HepG2 (cell line): ENCODE measurements at regions of chr10 and their contacts with region 1.

Region 1: DNA sequence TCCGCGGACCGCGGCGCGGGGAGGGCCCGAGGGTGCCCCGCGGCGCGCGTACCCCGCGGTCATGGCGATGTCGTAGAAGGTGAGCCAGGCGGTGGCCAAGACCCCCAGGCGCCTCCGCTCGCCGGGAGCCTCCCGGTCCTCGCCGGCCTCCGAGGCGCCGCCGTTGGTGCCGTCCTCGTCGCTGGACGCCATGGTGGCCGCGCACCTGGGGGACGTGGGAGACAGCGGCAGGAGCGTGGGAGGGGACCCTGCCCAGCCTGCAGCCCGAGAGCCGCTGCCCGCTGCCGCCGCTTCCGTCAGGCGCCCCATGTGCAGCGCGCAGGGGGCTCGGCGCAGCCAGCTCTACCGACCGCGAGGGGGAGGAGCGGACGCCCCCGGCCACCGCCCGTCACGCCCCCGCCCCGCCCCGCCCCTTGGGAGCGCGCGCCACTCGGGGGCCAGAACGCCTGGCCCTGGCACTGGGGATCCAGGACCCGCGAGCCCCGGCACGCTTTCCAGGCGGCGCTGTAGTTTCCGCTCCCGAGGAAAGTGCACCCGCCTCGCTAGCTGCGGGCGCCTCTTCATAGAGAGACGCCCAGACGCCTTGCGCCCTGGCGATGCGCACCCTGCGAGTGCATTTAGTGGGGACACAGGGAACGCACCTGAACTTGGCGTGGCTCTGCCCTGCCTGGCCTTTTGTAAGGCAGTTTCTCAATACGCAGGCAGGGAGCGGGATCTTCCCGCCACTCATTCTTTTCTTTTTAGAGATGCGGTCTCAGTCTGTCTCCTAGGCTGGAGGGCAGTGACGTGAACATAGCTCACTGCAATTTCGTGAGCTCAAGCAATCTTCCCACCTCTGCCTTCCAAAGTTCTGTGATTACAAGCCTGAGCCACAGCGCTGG is at the start of gene HACD1:
- DNase-seq: peak; percentile 73
- ATAC-seq: peak; percentile 90
- H3K4me3 ChIP-seq: peak within 1 kb of the TSS; percentile 69 to 84 (median 79)
- H3K27ac ChIP-seq: peak within 1 kb of the TSS; percentile 97
- H3K4me1 ChIP-seq: peaks cover 11% of the 10 kb centered on the region; the same call in 1 of the 2 replicates
- H3K27me3 ChIP-seq: peaks cover 0 to 8% of the 10 kb centered on the region in 2 experiments; a peak in 1 of 5 replicates
- CTCF ChIP-seq: peak; percentile 80
- EP300 ChIP-seq: 0 out of 4 replicates have a peak, but pooled peaks of 1 of the 2 experiments have one; percentile 14
- POLR2A ChIP-seq: peak; percentile 82 to 83
- RAD21 ChIP-seq: no peak; the same call in none of the 2 replicates
- total RNA-seq, gene HACD1: 31.7 and 47.6 TPM in 2 replicates

Region 2: DNA sequence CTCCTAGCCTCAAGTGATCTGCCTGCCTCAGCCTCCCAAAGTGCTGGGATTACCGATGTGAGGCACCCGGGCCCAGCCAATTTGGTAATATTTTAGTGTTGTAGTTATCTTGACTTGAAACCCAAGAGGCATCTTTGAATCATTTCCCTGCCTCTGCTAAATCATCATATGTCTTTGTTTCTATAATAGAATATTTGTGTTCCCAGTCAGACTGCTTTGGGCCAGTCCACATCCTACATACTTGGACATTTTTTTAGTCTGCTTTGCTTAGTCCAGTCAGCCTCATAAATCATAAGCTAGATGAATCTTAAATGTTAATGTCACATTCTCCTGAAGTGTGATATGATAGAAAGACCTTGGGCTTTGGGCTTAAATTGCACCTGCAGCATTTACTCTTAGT is 32.6 kb after region 1 on chr10:
- CTCF ChIA-PET with region 1: no interaction called
- POLR2A ChIA-PET with region 1: interaction called, 71 read pairs
- in situ Hi-C with region 1: no loop called
- intact Hi-C with region 1: no loop called
- DNase-seq: no peak
- ATAC-seq: no peak
- H3K4me3 ChIP-seq: peak overlapping the region in 1 of 3 experiments; percentile 51; a peak in 2 of 6 replicates
- H3K27ac ChIP-seq: peak overlapping the region; percentile 98
- H3K4me1 ChIP-seq: peaks cover 85% of the 10 kb centered on the region
- H3K27me3 ChIP-seq: no peaks in the 10 kb centered on the region; a peak in 1 of 5 replicates
- CTCF ChIP-seq: no peak
- EP300 ChIP-seq: no peak
- POLR2A ChIP-seq: no peak
- RAD21 ChIP-seq: no peak

Region 3: GRCh38 chr10:17673456-17674061 is 56.3 kb after region 1 on chr10:
- CTCF ChIA-PET with region 1: no interaction called
- POLR2A ChIA-PET with region 1: interaction called, 13 read pairs
- in situ Hi-C with region 1: no loop called
- intact Hi-C with region 1: loop called (anchors 2 kb)
- DNase-seq: peak; percentile 91
- ATAC-seq: peak; percentile 96
- H3K4me3 ChIP-seq: no peak overlapping the region
- H3K27ac ChIP-seq: peak overlapping the region; percentile 54
- H3K4me1 ChIP-seq: peaks cover 66% of the 10 kb centered on the region
- H3K27me3 ChIP-seq: no peaks in the 10 kb centered on the region
- CTCF ChIP-seq: no peak
- EP300 ChIP-seq: peak in 1 of 2 experiments; percentile 81; a peak in 2 of 4 replicates
- POLR2A ChIP-seq: no peak
- RAD21 ChIP-seq: no peak

Region 4: DNA sequence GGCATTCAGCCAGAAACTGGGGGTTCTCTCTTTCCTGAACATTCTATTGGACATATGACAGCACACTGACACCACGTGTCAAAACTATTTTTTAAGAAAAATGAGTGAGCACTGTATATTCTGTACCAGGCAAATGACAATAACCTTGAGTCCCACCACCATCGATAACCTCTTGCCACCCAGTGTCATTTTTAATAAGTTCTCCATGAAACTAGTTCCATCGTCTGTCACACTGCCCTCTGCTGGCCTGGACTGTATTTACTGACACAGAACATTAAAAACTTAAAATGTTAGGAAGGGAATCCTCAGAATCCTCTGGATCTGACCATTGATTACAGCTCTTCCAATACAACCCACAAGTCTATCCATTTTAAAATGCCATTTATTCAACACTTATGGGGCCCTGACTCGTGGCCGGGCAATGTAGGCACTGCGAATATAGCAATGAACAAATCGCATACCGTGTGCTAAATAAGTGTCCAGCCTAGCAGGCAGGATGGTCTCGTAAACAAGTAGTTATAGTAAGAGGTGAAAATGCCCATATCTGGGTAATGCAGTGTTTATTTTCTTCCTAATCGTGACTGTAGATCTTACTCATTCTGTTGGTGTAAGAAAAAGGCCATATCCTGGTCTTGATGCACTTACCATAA is 487.1 kb after region 1 on chr10:
- CTCF ChIA-PET with region 1: no interaction called
- POLR2A ChIA-PET with region 1: no interaction called
- in situ Hi-C with region 1: loop called (anchors 25 kb)
- intact Hi-C with region 1: no loop called
- DNase-seq: peak; percentile 23
- ATAC-seq: peak; percentile 34; the same call in 1 of the 3 replicates
- H3K4me3 ChIP-seq: no peak overlapping the region
- H3K27ac ChIP-seq: no peak overlapping the region
- H3K4me1 ChIP-seq: no peaks in the 10 kb centered on the region
- H3K27me3 ChIP-seq: no peaks in the 10 kb centered on the region; a peak in 1 of 5 replicates
- CTCF ChIP-seq: peak; percentile 55
- EP300 ChIP-seq: no peak
- POLR2A ChIP-seq: no peak
- RAD21 ChIP-seq: no peak